ENCODE measurements at regions of chr20 and their contacts with region 1.

Region 1: GRCh38 chr20:38842558-38842981 is 37.1 kb downstream of the PPP1R16B start:
- DNase-seq: peak; percentile 96
- H3K4me3 ChIP-seq: peak overlapping the region; percentile 57
- H3K27ac ChIP-seq: peak overlapping the region; percentile 99
- H3K4me1 ChIP-seq: peaks cover 83% of the 10 kb centered on the region
- CTCF ChIP-seq: no peak

Region 2: GRCh38 chr20:38855356-38855755 is 12.8 kb after region 1 on chr20:
- CTCF ChIA-PET with region 1: interaction called, 6 read pairs
- POLR2A ChIA-PET with region 1: interaction called, 16 read pairs
- intact Hi-C with region 1: loop called (anchors 1 kb)
- DNase-seq: no peak
- H3K4me3 ChIP-seq: no peak overlapping the region
- H3K27ac ChIP-seq: no peak overlapping the region
- H3K4me1 ChIP-seq: peaks cover 64% of the 10 kb centered on the region
- CTCF ChIP-seq: no peak

Region 3: GRCh38 chr20:38863024-38863851 is 20.7 kb after region 1 on chr20:
- CTCF ChIA-PET with region 1: interaction called, 6 read pairs
- POLR2A ChIA-PET with region 1: interaction called, 11 read pairs
- intact Hi-C with region 1: loop called (anchors 1 kb)
- DNase-seq: peak; percentile 87
- H3K4me3 ChIP-seq: peak overlapping the region; percentile 27
- H3K27ac ChIP-seq: peak overlapping the region; percentile 86
- H3K4me1 ChIP-seq: peaks cover 95% of the 10 kb centered on the region
- CTCF ChIP-seq: no peak

Region 4: GRCh38 chr20:38875175-38875993 is 32.8 kb after region 1 on chr20:
- CTCF ChIA-PET with region 1: interaction called, 3 read pairs
- POLR2A ChIA-PET with region 1: interaction called, 26 read pairs
- intact Hi-C with region 1: loop called (anchors 1 kb)
- DNase-seq: peak; percentile 97
- H3K4me3 ChIP-seq: peak overlapping the region; percentile 54
- H3K27ac ChIP-seq: peak overlapping the region; percentile 97
- H3K4me1 ChIP-seq: peaks cover 96% of the 10 kb centered on the region
- CTCF ChIP-seq: no peak; the same call in 1 of the 2 replicates

Measured in OCI-LY7 (cell line).